K562 (cell line): ENCODE measurements at regions of chr2 and their contacts with region 1.

Region 1: GRCh38 chr2:68643011-68643873 is at the start of gene PROKR1:
- DNase-seq: peak; percentile 53 to 67 (median 58)
- ATAC-seq: peak; percentile 88
- H3K4me3 ChIP-seq: peak within 1 kb of the TSS; percentile 55
- H3K27ac ChIP-seq: no peak within 1 kb of the TSS
- H3K4me1 ChIP-seq: peaks cover 0 to 12% of the 10 kb centered on the region in 2 experiments; a peak in 3 of 5 replicates
- H3K27me3 ChIP-seq: peaks cover 2 to 12% of the 10 kb centered on the region in 2 experiments; a peak in 1 of 5 replicates
- CTCF ChIP-seq: peak in 1 of 3 experiments; percentile 23; a peak in 1 of 6 replicates
- EP300 ChIP-seq: no peak
- POLR2A ChIP-seq: no peak
- RAD21 ChIP-seq: peak; percentile 34 to 57; a peak in 3 of 4 replicates
- polyA plus RNA-seq, gene PROKR1: 0.03 TPM in 1 of 2 experiments, not detected in the other

Region 2: DNA sequence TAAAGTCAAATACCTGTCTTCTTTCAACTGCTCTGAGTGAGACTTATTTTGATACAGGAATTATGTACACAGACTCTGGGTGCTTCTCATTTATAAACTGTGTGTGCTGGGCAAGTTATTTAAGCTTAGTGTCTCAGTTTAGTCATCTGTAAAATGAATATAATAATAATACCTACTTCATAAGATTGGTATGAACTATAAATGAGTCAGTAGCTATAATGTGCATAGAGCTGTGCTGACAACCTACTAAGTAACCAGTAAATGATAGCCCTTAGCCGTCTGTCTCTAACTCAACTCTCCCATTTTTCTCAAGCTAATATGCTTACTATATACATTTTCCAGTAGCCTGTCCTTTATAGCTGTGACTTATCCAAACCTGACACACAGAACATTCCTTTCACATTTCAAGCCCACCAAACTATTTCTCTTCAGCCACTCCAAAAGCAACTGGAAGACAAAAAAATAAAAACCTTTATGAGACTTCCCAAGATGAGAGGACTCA is 926.3 kb before region 1 on chr2:
- CTCF ChIA-PET with region 1: no interaction called
- POLR2A ChIA-PET with region 1: no interaction called
- in situ Hi-C with region 1: no loop called
- intact Hi-C with region 1: no loop called
- DNase-seq: no peak
- ATAC-seq: no peak
- H3K4me3 ChIP-seq: no peak overlapping the region
- H3K27ac ChIP-seq: no peak overlapping the region
- H3K4me1 ChIP-seq: no peaks in the 10 kb centered on the region
- H3K27me3 ChIP-seq: no peaks in the 10 kb centered on the region; a peak in 1 of 5 replicates
- CTCF ChIP-seq: no peak
- EP300 ChIP-seq: no peak
- POLR2A ChIP-seq: no peak
- RAD21 ChIP-seq: no peak

Region 3: GRCh38 chr2:68548396-68548795 is 94.8 kb before region 1 on chr2:
- CTCF ChIA-PET with region 1: no interaction called
- POLR2A ChIA-PET with region 1: no interaction called
- in situ Hi-C with region 1: no loop called
- intact Hi-C with region 1: no loop called
- DNase-seq: no peak
- ATAC-seq: no peak
- H3K4me3 ChIP-seq: no peak overlapping the region
- H3K27ac ChIP-seq: no peak overlapping the region
- H3K4me1 ChIP-seq: no peaks in the 10 kb centered on the region
- H3K27me3 ChIP-seq: no peaks in the 10 kb centered on the region
- CTCF ChIP-seq: no peak
- EP300 ChIP-seq: no peak
- POLR2A ChIP-seq: no peak
- RAD21 ChIP-seq: no peak

Region 4: DNA sequence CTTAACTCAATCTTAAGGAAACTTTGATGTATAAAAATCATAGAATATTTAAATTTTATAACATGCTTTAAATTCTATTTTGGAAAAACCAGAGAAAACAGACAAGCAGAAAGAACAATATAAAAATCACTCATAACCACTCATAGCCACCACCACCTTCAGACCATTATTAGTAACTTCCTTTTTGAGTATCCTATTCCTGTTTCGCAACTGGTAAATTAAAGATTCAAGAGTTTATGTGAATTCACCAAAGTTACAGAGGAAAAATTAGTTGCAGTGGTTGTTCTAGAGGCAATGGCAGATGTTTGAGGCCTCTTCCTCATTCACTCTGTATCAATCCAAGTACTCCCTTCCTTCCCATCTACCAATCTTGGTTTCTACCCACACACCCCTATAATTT is 49.2 kb before region 1 on chr2:
- CTCF ChIA-PET with region 1: no interaction called
- POLR2A ChIA-PET with region 1: no interaction called
- in situ Hi-C with region 1: no loop called
- intact Hi-C with region 1: no loop called
- DNase-seq: no peak
- ATAC-seq: no peak
- H3K4me3 ChIP-seq: no peak overlapping the region
- H3K27ac ChIP-seq: no peak overlapping the region
- H3K4me1 ChIP-seq: peaks cover 5 to 17% of the 10 kb centered on the region in 2 experiments; a peak in 3 of 5 replicates
- H3K27me3 ChIP-seq: no peaks in the 10 kb centered on the region
- CTCF ChIP-seq: no peak
- EP300 ChIP-seq: no peak
- POLR2A ChIP-seq: no peak
- RAD21 ChIP-seq: no peak

Region 5: DNA sequence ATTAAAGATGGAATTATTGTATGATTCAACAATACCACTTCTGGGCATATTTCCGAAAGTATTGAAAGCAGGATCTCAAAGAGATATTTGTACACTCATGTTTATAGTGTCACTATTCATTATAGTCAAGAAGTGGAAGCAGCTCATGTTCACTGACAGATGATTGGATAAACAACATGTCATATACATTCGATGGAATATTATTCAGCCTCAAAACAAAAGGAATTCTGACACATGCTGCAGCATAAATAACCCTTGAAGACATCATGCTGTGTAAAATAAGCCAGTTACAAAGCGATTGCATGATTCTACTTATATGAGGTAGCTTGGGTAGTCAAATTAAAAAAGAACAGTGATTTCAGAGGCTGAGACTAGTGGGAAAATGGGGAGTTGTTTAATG is 39.2 kb before region 1 on chr2:
- CTCF ChIA-PET with region 1: no interaction called
- POLR2A ChIA-PET with region 1: no interaction called
- in situ Hi-C with region 1: no loop called
- intact Hi-C with region 1: loop called (anchors 5 kb)
- DNase-seq: no peak
- ATAC-seq: no peak
- H3K4me3 ChIP-seq: no peak overlapping the region
- H3K27ac ChIP-seq: no peak overlapping the region
- H3K4me1 ChIP-seq: peaks cover 0 to 10% of the 10 kb centered on the region in 2 experiments; a peak in 2 of 5 replicates
- H3K27me3 ChIP-seq: no peaks in the 10 kb centered on the region
- CTCF ChIP-seq: no peak
- EP300 ChIP-seq: no peak
- POLR2A ChIP-seq: no peak
- RAD21 ChIP-seq: no peak

Region 6: DNA sequence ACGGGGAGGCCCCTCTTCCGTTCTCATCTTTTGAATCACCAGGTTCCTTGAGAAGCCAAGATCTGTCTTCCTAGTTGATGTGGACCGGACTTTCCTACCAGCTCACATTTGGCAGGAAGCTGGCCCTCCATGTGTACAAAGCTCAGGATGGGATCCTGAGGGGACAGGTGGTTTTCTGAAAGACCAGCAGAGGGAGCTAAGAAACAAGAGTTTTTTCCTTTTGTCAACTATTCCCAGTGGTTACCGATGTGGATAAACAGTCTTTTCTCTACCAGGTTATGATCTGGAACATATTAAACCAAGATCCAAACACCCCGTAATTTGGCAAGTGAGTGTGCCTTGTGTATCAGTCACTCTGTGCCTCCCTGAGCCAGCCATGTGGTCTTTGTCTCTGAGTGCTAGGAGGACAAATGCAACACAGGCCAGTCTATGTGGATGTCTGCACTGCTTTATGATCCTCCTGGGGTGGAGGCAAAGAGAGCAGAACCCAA is 66.2 kb after region 1 on chr2:
- CTCF ChIA-PET with region 1: interaction called, 3 read pairs
- POLR2A ChIA-PET with region 1: interaction called, 3 read pairs
- in situ Hi-C with region 1: no loop called
- intact Hi-C with region 1: loop called (anchors 1 kb)
- DNase-seq: peak; percentile 25 to 62 (median 43)
- ATAC-seq: peak; percentile 94
- H3K4me3 ChIP-seq: no peak overlapping the region
- H3K27ac ChIP-seq: no peak overlapping the region
- H3K4me1 ChIP-seq: no peaks in the 10 kb centered on the region; a peak in 1 of 5 replicates
- H3K27me3 ChIP-seq: no peaks in the 10 kb centered on the region; a peak in 1 of 5 replicates
- CTCF ChIP-seq: peak; percentile 56 to 81 (median 76); a peak in 5 of 6 replicates
- EP300 ChIP-seq: no peak
- POLR2A ChIP-seq: no peak
- RAD21 ChIP-seq: peak; percentile 75 to 83

Region 7: DNA sequence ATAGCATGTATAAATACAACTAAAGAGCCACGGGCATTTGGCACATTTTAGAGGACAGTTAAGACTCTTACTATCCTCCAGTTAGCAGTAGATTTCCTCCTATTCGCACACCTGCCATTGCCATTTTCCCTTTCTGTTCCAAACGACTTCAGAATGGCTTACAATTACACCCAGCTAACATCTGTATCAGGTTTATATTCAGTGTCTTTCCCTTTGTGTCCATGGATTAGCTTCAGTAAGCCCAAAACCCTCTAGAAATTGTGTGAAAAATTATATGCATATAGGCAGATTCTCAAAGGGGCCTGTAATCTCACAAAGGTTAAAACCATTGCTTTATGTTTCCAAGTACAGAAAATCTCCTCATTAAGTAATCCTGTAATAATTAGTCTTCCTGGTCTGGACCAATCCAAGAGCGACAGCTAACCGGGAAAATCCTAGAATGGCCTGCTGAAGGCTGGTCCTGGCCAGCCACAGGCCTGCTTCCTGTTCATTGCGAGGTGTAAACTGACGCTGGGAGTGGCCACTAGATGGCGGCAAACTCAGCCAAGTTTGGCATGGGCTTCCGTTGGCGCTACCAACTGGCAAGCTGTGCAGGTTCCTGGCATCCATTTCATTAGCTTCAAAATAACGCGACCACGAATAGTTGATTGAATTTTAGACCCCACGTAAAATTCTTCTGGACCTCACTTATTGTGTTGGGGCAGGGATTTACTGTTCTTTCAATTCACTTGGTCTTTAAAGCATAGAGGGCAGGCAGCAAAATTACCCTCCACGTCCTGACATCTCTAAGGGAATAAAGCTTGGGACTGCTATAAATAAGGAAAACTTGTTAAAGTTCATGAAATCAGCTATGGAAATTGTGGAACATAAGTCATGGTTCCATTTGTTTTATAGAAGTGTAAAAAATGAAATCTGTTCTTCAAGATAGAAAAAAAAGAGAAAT is 108.4 kb after region 1 on chr2:
- CTCF ChIA-PET with region 1: no interaction called
- POLR2A ChIA-PET with region 1: no interaction called
- in situ Hi-C with region 1: no loop called
- intact Hi-C with region 1: no loop called
- DNase-seq: peak; percentile 76 to 87 (median 77)
- ATAC-seq: peak; percentile 98
- H3K4me3 ChIP-seq: no peak overlapping the region
- H3K27ac ChIP-seq: no peak overlapping the region
- H3K4me1 ChIP-seq: peaks cover 0 to 12% of the 10 kb centered on the region in 2 experiments; a peak in 2 of 5 replicates
- H3K27me3 ChIP-seq: no peaks in the 10 kb centered on the region
- CTCF ChIP-seq: peak; percentile 91 to 95 (median 95)
- EP300 ChIP-seq: no peak
- POLR2A ChIP-seq: no peak
- RAD21 ChIP-seq: peak; percentile 91 to 95